Naive thymus-derived CD4-positive, alpha-beta T cell (primary cell): ENCODE measurements at regions of chr19 and their contacts with region 1.

Region 1: DNA sequence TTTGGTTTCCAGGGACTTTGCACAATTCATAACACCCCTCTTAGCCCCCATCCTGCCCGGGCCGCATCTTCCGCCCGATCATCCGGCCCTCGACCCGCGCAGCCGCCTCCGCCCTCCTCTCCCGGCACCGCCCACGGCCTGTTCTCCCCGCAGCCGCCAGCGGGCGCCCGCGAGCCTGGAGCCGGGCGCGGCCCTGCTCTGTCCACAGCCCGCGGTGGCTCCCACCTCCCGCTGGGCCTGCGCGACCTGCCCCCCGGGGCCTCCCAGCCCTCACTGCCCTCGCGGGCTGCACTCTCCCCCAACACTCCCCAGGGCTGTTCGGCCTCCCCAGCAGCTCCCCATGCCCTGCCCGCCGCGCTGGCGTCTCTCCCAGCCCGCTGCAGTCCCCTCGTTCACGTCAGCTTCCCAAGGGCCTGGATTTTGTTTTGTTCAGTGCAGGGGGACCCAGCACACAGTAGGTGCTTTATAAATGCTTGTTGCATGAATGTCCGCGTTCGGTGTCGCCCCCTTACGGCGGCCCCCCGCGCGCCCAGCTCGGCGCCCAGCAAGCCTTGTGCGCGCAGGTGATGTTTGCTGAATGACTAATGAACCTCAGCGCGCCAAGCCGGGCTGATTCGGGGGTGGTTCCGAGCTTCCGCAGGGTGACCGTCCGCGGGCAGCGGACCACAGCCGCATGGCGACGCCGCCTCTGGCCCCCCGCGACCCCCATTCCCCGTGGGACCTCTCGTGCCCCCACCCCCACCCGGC is 4.6 kb upstream of the APC2 start:
- DNase-seq: peak; percentile 48 to 88 (median 71)
- ATAC-seq: peak; percentile 94
- H3K4me3 ChIP-seq: peak overlapping the region; percentile 50
- H3K4me3 Mint-ChIP-seq: peak overlapping the region; percentile 34 to 78 (median 64)
- H3K27ac ChIP-seq: no peak overlapping the region
- H3K27ac Mint-ChIP-seq: peak overlapping the region in 1 of 9 donors; percentile 5
- H3K4me1 ChIP-seq: peaks cover 5 to 9% of the 10 kb centered on the region in 2 donors
- H3K4me1 Mint-ChIP-seq: peaks cover 9 to 30% (median 15%) of the 10 kb centered on the region in 7 donors
- H3K27me3 ChIP-seq: peaks cover 12 to 27% of the 10 kb centered on the region in 2 donors
- H3K27me3 Mint-ChIP-seq: peaks cover 22 to 32% (median 25%) of the 10 kb centered on the region in 5 donors

Region 2: GRCh38 chr19:843180-843835 is 602.0 kb before region 1 on chr19:
- CTCF ChIA-PET with region 1: no interaction called
- POLR2A ChIA-PET with region 1: no interaction called
- intact Hi-C with region 1: no loop called
- DNase-seq: no peak
- ATAC-seq: no peak
- H3K4me3 ChIP-seq: no peak overlapping the region
- H3K4me3 Mint-ChIP-seq: peak overlapping the region in 5 of 10 donors; percentile 7 to 32 (median 19)
- H3K27ac ChIP-seq: no peak overlapping the region
- H3K27ac Mint-ChIP-seq: no peak overlapping the region
- H3K4me1 ChIP-seq: no peaks in the 10 kb centered on the region
- H3K4me1 Mint-ChIP-seq: peaks cover 0 to 8% (median 4%) of the 10 kb centered on the region in 7 donors
- H3K27me3 ChIP-seq: peaks cover 2 to 19% of the 10 kb centered on the region in 2 donors
- H3K27me3 Mint-ChIP-seq: peaks cover 18 to 41% (median 35%) of the 10 kb centered on the region in 5 donors

Region 3: GRCh38 chr19:1470203-1471009 is 25.0 kb after region 1 on chr19:
- CTCF ChIA-PET with region 1: interaction called, 4 read pairs
- POLR2A ChIA-PET with region 1: interaction called, 5 read pairs
- intact Hi-C with region 1: loop called in 1 of 2 experiments (anchors 1 kb)
- DNase-seq: peak in 8 of 9 donors; percentile 43 to 73 (median 64)
- ATAC-seq: peak; percentile 77
- H3K4me3 ChIP-seq: peak overlapping the region; percentile 59
- H3K4me3 Mint-ChIP-seq: peak overlapping the region; percentile 42 to 87 (median 74)
- H3K27ac ChIP-seq: no peak overlapping the region
- H3K27ac Mint-ChIP-seq: peak overlapping the region in 2 of 9 donors; percentile 43 to 68
- H3K4me1 ChIP-seq: peaks cover 19 to 30% of the 10 kb centered on the region in 2 donors
- H3K4me1 Mint-ChIP-seq: peaks cover 0 to 14% (median 12%) of the 10 kb centered on the region in 7 donors
- H3K27me3 ChIP-seq: peaks cover 0 to 6% of the 10 kb centered on the region in 2 donors
- H3K27me3 Mint-ChIP-seq: peaks cover 0 to 16% (median 0%) of the 10 kb centered on the region in 5 donors